HepG2 (cell line): ENCODE measurements at regions of chr17 and their contacts with region 1.

Region 1: GRCh38 chr17:79045842-79046196 is 21.9 kb downstream of the C1QTNF1 start:
- DNase-seq: peak; percentile 71
- ATAC-seq: peak; percentile 86
- H3K4me3 ChIP-seq: no peak overlapping the region
- H3K27ac ChIP-seq: no peak overlapping the region
- H3K4me1 ChIP-seq: peaks cover 29% of the 10 kb centered on the region
- H3K27me3 ChIP-seq: peaks cover 20 to 74% of the 10 kb centered on the region in 2 experiments; a peak in 4 of 5 replicates
- CTCF ChIP-seq: peak; percentile 96
- EP300 ChIP-seq: no peak
- POLR2A ChIP-seq: no peak
- RAD21 ChIP-seq: peak; percentile 92

Region 2: DNA sequence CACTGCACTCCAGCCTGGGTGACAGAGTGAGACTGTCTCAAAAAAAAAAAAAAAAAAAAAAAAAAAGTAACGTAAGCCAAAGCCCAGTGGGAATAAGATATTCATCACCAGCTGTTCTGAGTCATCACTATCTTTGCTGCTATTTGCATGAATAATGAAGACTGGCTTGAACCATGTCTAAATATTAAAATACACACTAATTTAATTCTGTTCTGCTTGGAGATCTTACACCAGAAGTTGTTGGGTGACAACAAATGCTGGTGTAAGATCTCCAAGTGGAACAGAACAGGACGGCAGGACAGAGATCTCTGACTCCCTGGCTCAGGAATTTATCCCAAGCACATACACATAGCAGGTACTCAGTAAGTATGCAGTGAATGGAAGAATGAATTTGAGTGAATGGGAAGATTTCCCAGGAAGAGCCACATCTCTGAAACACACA is 488.2 kb before region 1 on chr17:
- CTCF ChIA-PET with region 1: no interaction called
- POLR2A ChIA-PET with region 1: no interaction called
- in situ Hi-C with region 1: no loop called
- intact Hi-C with region 1: no loop called
- DNase-seq: no peak
- ATAC-seq: peak; percentile 36
- H3K4me3 ChIP-seq: peak overlapping the region in 1 of 3 experiments; percentile 14; a peak in 1 of 6 replicates
- H3K27ac ChIP-seq: peak overlapping the region; percentile 31
- H3K4me1 ChIP-seq: peaks cover 32% of the 10 kb centered on the region
- H3K27me3 ChIP-seq: no peaks in the 10 kb centered on the region; a peak in 1 of 5 replicates
- CTCF ChIP-seq: no peak
- EP300 ChIP-seq: no peak
- POLR2A ChIP-seq: no peak
- RAD21 ChIP-seq: no peak

Region 3: DNA sequence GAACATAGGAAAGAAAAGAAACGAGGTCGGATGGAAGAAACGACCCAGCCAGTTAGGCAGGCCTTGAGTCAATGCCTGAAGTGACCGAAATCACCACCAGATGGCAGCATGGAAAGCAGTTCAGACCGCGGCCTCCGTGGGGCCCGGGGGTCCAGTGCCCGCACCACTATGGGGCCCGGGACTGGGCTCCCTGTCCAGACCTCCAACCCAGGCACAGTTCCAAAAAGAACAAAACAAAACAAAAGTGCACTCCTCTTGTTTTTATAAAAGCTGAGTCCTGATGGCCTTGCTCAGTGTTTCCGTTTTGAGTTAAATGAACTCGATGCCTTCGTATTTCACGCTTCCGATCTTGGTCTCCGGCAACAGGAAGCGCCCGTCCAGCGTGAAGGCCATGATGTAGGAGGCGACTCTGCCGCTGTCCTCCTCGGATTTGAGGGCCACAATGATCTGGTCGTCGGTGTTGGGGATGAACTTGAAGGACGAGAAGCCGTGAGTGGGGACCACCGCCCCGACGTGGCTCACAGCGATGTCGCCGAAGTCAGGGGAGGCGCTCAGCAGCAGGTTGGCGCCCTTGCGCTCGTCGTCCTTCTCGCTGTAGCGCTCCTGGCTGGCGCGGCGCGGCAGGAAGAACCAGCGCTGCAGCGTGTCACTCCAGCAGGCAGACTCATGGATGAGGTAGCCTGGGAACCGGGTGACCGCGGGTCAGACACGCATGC is 52.4 kb before region 1 on chr17:
- CTCF ChIA-PET with region 1: interaction called, 9 read pairs
- POLR2A ChIA-PET with region 1: no interaction called
- in situ Hi-C with region 1: no loop called
- intact Hi-C with region 1: loop called (anchors 2 kb)
- DNase-seq: peak; percentile 48
- ATAC-seq: peak; percentile 79
- H3K4me3 ChIP-seq: no peak overlapping the region
- H3K27ac ChIP-seq: no peak overlapping the region
- H3K4me1 ChIP-seq: no peaks in the 10 kb centered on the region
- H3K27me3 ChIP-seq: no peaks in the 10 kb centered on the region
- CTCF ChIP-seq: peak; percentile 88
- EP300 ChIP-seq: no peak
- POLR2A ChIP-seq: no peak
- RAD21 ChIP-seq: peak; percentile 67

Region 4: DNA sequence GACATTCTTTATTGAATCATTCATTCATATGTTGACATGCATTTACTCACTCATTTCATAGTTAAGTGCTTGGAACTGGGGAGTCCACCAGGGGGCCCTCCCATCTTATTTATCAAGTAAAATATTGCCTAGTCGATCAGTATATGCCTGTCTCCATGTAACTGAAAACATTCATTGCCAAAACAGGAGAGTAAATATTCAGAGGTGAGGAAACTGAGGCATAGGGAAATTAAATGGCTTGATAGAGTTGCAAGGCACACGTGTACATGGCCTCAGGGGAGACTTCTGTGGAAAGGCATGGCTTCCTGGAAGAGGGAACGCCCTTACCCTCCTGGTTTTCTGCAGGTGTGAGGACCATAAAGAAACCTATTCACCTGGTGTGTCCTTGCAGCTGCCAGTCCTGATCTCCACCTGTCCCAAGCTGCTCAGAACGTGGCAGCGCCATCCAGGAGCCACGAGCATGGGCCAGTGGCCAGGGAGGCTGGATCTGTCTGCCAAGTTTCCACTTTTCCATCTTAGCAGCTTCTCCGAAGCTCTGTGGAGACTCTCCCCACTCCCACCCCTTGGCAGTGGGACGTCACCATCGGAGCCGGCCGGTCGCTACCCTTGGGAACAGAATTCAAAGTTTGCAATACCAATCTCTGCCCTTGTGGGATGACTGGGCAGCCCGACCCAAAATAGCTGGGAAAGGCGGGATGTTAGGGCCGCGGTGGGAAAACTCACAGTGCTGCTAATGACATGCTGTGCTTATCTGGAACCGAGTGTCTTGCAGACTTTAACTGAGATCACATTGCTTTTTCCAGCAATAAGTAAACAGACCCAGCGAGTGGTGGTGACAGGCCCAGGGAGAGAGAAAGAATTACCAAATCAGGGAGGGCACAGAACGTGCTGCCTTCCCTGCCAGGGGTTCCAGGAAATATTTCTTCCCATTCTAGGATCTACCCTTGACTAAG is 25.9 kb before region 1 on chr17:
- CTCF ChIA-PET with region 1: interaction called, 71 read pairs
- POLR2A ChIA-PET with region 1: interaction called, 127 read pairs
- in situ Hi-C with region 1: no loop called
- intact Hi-C with region 1: loop called (anchors 1 kb)
- DNase-seq: peak; percentile 79
- ATAC-seq: peak; percentile 66
- H3K4me3 ChIP-seq: peak overlapping the region in 1 of 3 experiments; percentile 1; a peak in 1 of 6 replicates
- H3K27ac ChIP-seq: no peak overlapping the region
- H3K4me1 ChIP-seq: peaks cover 41% of the 10 kb centered on the region
- H3K27me3 ChIP-seq: no peaks in the 10 kb centered on the region
- CTCF ChIP-seq: peak; percentile 76
- EP300 ChIP-seq: no peak
- POLR2A ChIP-seq: no peak
- RAD21 ChIP-seq: peak; percentile 85

Region 5: DNA sequence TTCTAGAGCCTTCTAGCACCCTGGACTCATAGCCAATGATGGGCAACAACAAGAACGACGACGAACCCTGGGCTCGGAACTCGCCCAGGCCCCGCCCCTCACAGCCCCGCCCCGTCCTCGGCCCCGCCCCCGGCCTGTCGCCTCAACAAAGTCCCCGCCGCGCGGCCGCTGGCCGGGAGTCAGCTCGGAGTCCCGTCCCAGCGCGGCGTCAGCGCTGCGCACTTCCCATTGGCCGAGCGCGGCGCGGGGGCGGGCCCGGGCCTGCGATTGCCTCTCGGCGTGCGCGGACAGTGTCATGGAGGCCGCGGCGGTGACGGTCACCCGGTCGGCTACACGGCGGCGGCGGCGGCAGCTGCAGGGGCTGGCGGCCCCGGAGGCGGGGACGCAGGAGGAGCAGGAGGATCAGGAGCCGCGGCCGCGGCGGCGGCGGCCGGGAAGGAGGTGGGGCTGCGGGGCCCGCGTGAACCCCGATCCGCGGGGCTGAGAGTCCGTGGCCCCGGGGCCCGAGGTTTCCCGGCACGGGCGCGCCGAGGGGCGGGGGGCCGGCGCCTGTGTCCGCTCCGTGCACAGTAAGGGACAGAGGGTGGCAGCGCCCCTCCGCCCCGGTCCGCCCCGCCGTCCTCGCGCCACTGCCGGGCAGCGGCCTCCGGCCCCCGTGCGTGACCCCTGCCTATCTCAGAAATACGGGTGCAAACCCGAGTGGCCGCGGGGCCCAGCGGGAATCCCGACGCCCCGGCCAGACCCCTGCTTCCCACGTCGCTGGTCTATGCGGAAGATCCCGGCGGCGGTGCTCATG is 29.0 kb after region 1 on chr17 and contains the start of gene ENGASE:
- CTCF ChIA-PET with region 1: no interaction called
- POLR2A ChIA-PET with region 1: interaction called, 11 read pairs
- in situ Hi-C with region 1: loop called (anchors 5 kb)
- intact Hi-C with region 1: no loop called
- DNase-seq: peak; percentile 88
- ATAC-seq: peak; percentile 96
- H3K4me3 ChIP-seq: peak within 1 kb of the TSS; percentile 78 to 87 (median 83)
- H3K27ac ChIP-seq: peak within 1 kb of the TSS; percentile 47
- H3K4me1 ChIP-seq: peaks cover 41% of the 10 kb centered on the region
- H3K27me3 ChIP-seq: peaks cover 0 to 17% of the 10 kb centered on the region in 2 experiments; a peak in 2 of 5 replicates
- CTCF ChIP-seq: no peak
- EP300 ChIP-seq: no peak
- POLR2A ChIP-seq: peak; percentile 48 to 84; a peak in 3 of 4 replicates
- RAD21 ChIP-seq: no peak; the same call in 1 of the 2 replicates
- total RNA-seq, gene ENGASE: 2.8 and 10.6 TPM in 2 replicates

Region 6: GRCh38 chr17:79082311-79083190 is 36.7 kb after region 1 on chr17:
- CTCF ChIA-PET with region 1: interaction called, 23 read pairs
- POLR2A ChIA-PET with region 1: no interaction called
- in situ Hi-C with region 1: loop called (anchors 5 kb)
- intact Hi-C with region 1: loop called (anchors 1 kb)
- DNase-seq: peak; percentile 27
- ATAC-seq: peak; percentile 71
- H3K4me3 ChIP-seq: no peak overlapping the region
- H3K27ac ChIP-seq: no peak overlapping the region
- H3K4me1 ChIP-seq: no peaks in the 10 kb centered on the region
- H3K27me3 ChIP-seq: no peaks in the 10 kb centered on the region
- CTCF ChIP-seq: peak; percentile 93
- EP300 ChIP-seq: no peak
- POLR2A ChIP-seq: no peak
- RAD21 ChIP-seq: peak; percentile 87

Region 7: GRCh38 chr17:79109570-79109969 is 63.8 kb after region 1 on chr17:
- CTCF ChIA-PET with region 1: no interaction called
- POLR2A ChIA-PET with region 1: no interaction called
- in situ Hi-C with region 1: no loop called
- intact Hi-C with region 1: no loop called
- DNase-seq: no peak
- ATAC-seq: peak; percentile 39
- H3K4me3 ChIP-seq: no peak overlapping the region
- H3K27ac ChIP-seq: no peak overlapping the region
- H3K4me1 ChIP-seq: no peaks in the 10 kb centered on the region
- H3K27me3 ChIP-seq: peaks cover 52 to 100% of the 10 kb centered on the region in 2 experiments
- CTCF ChIP-seq: peak; percentile 40
- EP300 ChIP-seq: no peak
- POLR2A ChIP-seq: no peak
- RAD21 ChIP-seq: no peak

Region 8: GRCh38 chr17:79393358-79394202 is 347.8 kb after region 1 on chr17:
- CTCF ChIA-PET with region 1: interaction called, 11 read pairs
- POLR2A ChIA-PET with region 1: no interaction called
- in situ Hi-C with region 1: no loop called
- intact Hi-C with region 1: no loop called
- DNase-seq: peak; percentile 50
- ATAC-seq: peak; percentile 82
- H3K4me3 ChIP-seq: no peak overlapping the region
- H3K27ac ChIP-seq: no peak overlapping the region
- H3K4me1 ChIP-seq: no peaks in the 10 kb centered on the region
- H3K27me3 ChIP-seq: peaks cover 23 to 92% of the 10 kb centered on the region in 2 experiments
- CTCF ChIP-seq: peak; percentile 98
- EP300 ChIP-seq: no peak
- POLR2A ChIP-seq: no peak
- RAD21 ChIP-seq: peak; percentile 91